ENCODE measurements at regions of chr5 and their contacts with region 1.

Region 1: GRCh38 chr5:56099346-56099745 is 104.6 kb upstream of the IL6ST start:
- DNase-seq: no peak
- ATAC-seq: peak in 1 of 8 donors; percentile 56
- H3K4me3 ChIP-seq: no peak overlapping the region
- H3K27ac ChIP-seq: no peak overlapping the region
- H3K4me1 ChIP-seq: peaks cover 0 to 14% (median 7%) of the 10 kb centered on the region in 9 donors
- H3K27me3 ChIP-seq: no peaks in the 10 kb centered on the region
- CTCF ChIP-seq: no peak

Region 2: GRCh38 chr5:56128113-56128512 is 28.8 kb after region 1 on chr5:
- intact Hi-C with region 1: loop called in 1 of 10 experiments (anchors 2 kb)
- DNase-seq: no peak
- ATAC-seq: peak in 1 of 8 donors; percentile 14
- H3K4me3 ChIP-seq: no peak overlapping the region
- H3K27ac ChIP-seq: no peak overlapping the region
- H3K4me1 ChIP-seq: peaks cover 0 to 32% (median 10%) of the 10 kb centered on the region in 9 donors
- H3K27me3 ChIP-seq: no peaks in the 10 kb centered on the region
- CTCF ChIP-seq: no peak

Measured in heart right ventricle (tissue), 16 donors.